MCF 10A (cell line): ENCODE measurements at regions of chr11 and their contacts with region 1.

Region 1: DNA sequence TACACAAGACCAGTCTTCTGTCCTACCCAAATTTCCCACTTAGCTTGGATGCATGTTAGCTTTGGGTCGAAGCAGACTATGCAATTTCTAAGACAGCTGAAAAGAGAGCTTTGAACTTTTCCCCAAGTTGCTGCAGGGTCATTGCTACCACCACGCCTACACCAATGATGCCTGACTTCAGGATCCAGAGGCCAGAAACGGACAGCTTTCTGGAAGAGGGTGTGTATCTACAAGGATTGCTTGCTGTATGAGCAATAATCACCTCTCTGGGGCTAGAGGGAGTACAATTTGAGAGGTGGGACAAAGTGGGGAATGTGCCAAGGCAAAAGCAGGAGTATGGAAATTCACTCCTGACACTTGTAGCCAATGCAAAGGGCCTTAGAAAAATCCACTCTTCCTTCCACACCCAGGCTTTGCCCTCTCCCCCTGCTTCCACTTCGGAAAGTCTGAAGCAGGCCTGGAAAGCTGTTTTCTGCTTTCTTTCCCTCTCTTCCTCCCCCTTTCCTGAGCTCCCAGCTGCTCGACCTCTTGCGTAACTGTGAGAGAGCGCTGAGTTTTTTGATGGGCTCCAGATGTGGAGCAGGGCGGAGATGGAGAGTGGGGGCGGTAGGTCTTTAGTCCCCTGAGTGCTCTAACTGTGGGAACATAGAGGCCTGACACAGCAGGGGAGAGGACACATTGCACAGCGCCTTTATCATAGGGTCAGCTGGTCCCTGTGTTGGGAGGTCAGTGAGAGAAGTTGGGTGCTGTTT is 2.1 kb upstream of the PHLDB1 start:
- DNase-seq: peak; percentile 65
- H3K4me3 Mint-ChIP-seq: no peak overlapping the region
- H3K27ac Mint-ChIP-seq: no peak overlapping the region
- H3K4me1 Mint-ChIP-seq: peaks cover 23% of the 10 kb centered on the region
- H3K27me3 Mint-ChIP-seq: no peaks in the 10 kb centered on the region
- CTCF ChIP-seq: no peak

Region 2: DNA sequence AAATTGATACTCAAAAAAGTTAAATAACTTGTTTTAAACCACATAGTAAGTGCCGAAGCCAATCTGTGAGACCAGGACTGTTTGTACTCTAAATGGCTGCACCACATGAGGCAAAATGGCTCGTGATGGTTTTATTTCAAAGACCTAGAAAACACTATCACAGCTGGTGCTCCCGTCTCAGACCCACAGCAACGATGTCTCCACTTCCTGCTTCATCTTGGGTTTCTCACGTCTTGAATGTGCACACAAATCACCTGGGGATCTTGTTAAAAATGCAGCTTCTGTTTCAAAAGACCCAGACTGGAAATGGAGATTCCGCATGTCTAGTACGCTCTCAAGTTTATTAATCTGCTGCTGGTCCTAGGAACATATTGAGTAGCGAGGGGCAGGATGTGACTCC is 299.6 kb before region 1 on chr11:
- CTCF ChIA-PET with region 1: no interaction called
- POLR2A ChIA-PET with region 1: no interaction called
- intact Hi-C with region 1: no loop called
- DNase-seq: no peak
- H3K4me3 Mint-ChIP-seq: no peak overlapping the region
- H3K27ac Mint-ChIP-seq: no peak overlapping the region
- H3K4me1 Mint-ChIP-seq: no peaks in the 10 kb centered on the region
- H3K27me3 Mint-ChIP-seq: peaks cover 28% of the 10 kb centered on the region
- CTCF ChIP-seq: no peak

Region 3: DNA sequence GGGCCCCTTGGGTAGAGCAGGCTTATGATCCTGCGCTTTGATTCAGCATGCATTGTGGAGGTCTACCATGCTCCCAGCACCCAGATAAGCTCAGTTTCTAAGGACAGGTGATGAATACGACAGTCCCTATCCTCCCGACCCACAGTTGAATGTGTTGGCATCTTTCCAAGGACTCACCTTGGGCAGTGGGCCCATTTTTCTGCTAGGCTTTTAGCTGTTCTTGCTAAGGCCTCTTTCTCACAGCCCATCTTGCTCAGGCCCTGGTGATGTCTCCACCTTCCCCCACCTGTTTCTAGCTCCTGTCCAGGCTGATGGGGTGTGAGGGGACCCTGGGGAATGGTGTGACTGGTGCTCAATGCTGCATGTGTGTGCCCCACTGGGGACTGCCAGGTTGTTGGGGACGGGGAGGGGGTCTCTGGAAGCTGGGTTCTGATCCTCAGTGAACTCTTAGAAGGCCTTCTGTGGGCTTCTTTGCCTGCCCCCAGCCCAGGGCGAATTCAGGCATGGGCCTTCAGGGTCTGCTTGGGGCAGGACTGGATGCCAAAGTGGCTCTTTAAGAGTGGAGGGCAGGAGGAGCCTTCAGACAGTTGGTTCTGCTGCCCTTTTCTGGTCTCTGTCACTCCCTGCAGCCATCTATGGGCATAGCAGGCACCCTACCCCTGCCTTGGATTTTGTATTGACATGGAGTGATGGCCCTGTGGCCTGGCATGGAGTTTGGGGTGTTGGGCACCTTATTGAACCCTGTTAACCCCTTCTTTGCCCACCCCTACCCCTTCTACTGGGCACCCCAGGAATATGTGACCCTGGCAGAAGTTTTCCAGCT is 35.3 kb after region 1 on chr11:
- CTCF ChIA-PET with region 1: interaction called, 21 read pairs
- POLR2A ChIA-PET with region 1: interaction called, 7 read pairs
- intact Hi-C with region 1: loop called (anchors 1 kb)
- DNase-seq: peak; percentile 54
- H3K4me3 Mint-ChIP-seq: no peak overlapping the region
- H3K27ac Mint-ChIP-seq: no peak overlapping the region
- H3K4me1 Mint-ChIP-seq: peaks cover 9% of the 10 kb centered on the region
- H3K27me3 Mint-ChIP-seq: no peaks in the 10 kb centered on the region
- CTCF ChIP-seq: peak; percentile 50